Calu3 (cell line): ENCODE measurements at regions of chr16 and their contacts with region 1.

Region 1: DNA sequence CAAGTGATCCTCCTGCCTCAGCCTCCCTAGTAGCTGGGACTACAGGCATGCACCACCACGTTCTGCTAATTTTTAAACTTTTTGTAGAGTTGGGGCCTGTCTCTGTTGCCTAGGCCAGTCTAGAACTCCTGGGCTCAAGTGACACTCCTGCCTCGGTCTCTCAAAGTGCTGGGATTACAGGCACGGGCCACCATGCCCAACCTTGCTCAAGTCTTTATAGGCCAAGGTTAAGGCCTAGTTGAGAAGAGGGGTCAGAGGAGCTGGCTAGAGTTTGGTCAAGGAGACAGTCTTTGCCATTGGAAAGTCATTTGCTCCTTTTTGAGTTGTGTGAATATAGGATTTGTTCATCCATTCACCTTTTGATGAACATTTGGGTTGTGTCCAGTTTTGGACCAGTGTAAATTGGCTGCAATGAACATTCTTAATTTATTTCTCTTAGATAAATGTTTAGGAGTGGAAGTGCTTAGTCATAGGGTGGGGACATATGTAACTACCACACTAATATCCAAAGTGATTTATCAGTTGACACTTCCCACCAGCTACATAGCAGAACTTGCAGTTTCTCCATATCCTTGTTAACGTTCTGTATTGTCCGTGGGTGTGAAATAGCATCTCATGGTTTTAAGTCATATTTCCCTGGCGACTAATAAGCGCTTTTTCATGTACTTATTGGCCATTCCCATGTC is 30.7 kb upstream of the ARHGAP17 start:
- DNase-seq: no peak
- H3K4me3 Mint-ChIP-seq: no peak overlapping the region
- H3K27ac Mint-ChIP-seq: no peak overlapping the region
- H3K4me1 Mint-ChIP-seq: peaks cover 35% of the 10 kb centered on the region
- H3K27me3 Mint-ChIP-seq: no peaks in the 10 kb centered on the region
- CTCF ChIP-seq: no peak

Region 2: GRCh38 chr16:24844101-24845030 is 201.5 kb before region 1 on chr16:
- CTCF ChIA-PET with region 1: interaction called, 4 read pairs
- intact Hi-C with region 1: loop called (anchors 10 kb)
- DNase-seq: peak; percentile 76
- H3K4me3 Mint-ChIP-seq: peak overlapping the region; percentile 23
- H3K27ac Mint-ChIP-seq: peak overlapping the region; percentile 94
- H3K4me1 Mint-ChIP-seq: peaks cover 56% of the 10 kb centered on the region
- H3K27me3 Mint-ChIP-seq: no peaks in the 10 kb centered on the region
- CTCF ChIP-seq: no peak

Region 3: DNA sequence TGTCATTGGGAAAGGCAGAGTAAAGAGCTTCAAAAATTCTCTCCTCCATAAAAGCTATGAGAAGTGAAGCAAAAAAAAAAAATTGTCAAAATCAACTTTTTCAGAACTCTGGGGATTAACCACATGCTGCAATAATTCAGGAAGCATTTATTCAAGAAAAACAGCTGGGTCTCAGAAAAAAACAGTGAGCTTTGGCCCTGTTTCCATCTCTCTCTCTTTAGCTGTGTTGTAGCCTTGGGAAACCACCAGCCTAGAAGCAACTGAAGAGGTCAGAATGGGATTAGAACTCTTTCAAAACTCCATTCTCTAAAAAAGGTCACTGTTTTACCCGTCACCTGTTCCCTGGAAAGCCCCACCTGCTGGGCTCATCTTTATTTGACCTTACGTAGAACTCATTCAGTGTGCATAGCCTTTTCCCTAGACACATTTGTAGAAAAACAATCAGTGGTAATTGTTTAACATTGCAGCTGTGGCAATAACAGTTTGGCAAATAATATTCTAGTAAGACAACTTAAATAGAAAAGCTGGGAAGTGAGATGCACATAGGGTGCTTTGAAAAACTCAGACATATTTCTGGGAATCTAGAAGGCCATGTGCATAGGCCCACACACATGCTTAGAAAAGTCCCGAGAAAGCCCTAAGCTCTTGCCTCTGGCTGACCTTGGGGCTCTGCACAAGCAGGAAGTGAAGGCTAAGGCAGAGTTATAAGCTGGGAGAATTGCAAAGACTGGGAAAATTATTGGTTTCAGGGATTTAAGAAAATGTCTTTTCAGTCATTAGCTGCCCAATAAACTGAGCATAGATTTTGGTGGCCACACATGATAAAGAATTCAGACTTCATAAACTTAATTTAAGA is 182.0 kb before region 1 on chr16:
- CTCF ChIA-PET with region 1: no interaction called
- intact Hi-C with region 1: no loop called
- DNase-seq: no peak
- H3K4me3 Mint-ChIP-seq: no peak overlapping the region
- H3K27ac Mint-ChIP-seq: no peak overlapping the region
- H3K4me1 Mint-ChIP-seq: peaks cover 11% of the 10 kb centered on the region
- H3K27me3 Mint-ChIP-seq: no peaks in the 10 kb centered on the region
- CTCF ChIP-seq: no peak

Region 4: DNA sequence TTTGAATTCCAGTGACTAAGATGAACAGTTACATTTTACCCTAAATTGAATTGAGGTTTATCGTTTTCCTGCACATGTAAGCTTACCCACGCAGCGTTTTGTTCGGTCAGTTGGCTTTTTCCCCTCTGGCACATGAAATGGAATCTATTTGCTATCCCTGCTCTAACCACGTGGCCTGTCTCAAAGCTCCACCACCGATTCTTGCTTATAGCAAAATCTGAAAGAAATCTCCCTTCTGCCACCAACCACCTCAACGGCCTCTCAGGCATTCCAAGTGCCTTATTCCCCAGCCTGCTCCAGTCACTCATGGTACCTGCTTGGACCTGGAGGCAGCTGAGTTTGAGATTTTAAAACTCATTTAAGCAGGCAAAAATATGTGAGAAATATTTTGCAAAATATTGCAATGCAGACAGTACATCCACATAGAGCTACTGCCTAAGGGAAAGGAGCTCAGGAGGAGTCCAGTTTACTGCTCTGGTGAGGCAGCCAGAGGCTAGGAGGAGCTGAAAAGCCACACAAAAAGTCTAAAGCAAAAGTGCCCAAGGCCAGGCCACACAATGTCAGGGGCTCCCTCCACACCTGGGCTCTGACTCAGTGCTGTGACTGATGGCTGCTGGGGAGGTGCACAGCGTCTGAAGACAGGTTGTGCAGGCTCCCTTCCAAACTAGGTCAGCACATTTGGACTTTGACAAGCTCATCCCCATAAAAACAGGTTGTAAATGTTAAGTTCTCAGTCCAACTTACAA is 57.1 kb before region 1 on chr16:
- CTCF ChIA-PET with region 1: interaction called, 3 read pairs
- intact Hi-C with region 1: loop called (anchors 5 kb)
- DNase-seq: peak; percentile 75
- H3K4me3 Mint-ChIP-seq: peak overlapping the region; percentile 32
- H3K27ac Mint-ChIP-seq: peak overlapping the region; percentile 49
- H3K4me1 Mint-ChIP-seq: peaks cover 67% of the 10 kb centered on the region
- H3K27me3 Mint-ChIP-seq: no peaks in the 10 kb centered on the region
- CTCF ChIP-seq: no peak

Region 5: DNA sequence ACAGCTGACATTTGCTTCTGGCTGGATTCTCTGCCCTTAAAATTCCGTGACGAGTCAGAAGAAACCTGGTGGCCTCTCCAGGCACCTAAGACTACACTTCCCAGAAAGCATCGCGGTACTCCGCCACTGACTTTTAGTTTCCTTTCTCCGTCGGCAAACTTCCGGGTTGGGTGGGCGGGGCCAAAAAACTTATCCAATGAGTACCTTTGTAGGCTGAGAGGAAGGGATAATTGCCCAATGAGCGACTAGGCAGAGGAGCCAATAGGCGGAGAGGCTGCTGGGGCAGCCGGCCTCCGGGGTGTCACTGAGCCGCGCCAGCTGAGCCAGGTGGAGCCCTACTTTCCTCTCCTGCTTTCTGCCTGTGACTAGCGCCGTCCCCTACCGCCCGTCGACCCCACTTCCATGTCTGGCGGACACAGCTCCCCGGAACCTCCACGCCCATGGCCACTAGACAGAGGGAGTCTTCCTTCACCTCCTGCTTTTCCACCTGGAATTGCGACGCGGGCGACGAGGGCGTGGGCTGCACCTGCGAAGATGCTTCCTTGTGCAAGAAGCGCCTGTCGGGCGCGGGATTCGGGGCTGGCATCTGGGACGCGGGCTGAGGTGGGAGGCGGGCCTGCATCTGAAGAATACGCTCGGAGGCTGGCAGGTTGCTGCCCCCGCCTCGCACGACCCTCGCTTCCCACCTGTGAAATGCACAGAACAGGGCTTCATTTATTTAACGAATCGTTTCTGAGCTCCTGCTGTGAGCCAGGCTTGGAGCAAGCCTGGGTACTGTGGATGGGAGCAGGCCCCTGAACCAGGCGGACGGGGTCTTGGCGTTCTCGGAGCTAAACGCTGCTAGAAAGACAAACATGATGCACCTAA is 14.2 kb before region 1 on chr16:
- CTCF ChIA-PET with region 1: interaction called, 5 read pairs
- intact Hi-C with region 1: loop called (anchors 2 kb)
- DNase-seq: peak; percentile 95
- H3K4me3 Mint-ChIP-seq: peak overlapping the region; percentile 95
- H3K27ac Mint-ChIP-seq: peak overlapping the region; percentile 77
- H3K4me1 Mint-ChIP-seq: peaks cover 21% of the 10 kb centered on the region
- H3K27me3 Mint-ChIP-seq: no peaks in the 10 kb centered on the region
- CTCF ChIP-seq: no peak

Region 6: GRCh38 chr16:25143928-25144327 is 98.1 kb after region 1 on chr16:
- CTCF ChIA-PET with region 1: no interaction called
- intact Hi-C with region 1: no loop called
- DNase-seq: peak; percentile 26
- H3K4me3 Mint-ChIP-seq: no peak overlapping the region
- H3K27ac Mint-ChIP-seq: no peak overlapping the region
- H3K4me1 Mint-ChIP-seq: peaks cover 6% of the 10 kb centered on the region
- H3K27me3 Mint-ChIP-seq: no peaks in the 10 kb centered on the region
- CTCF ChIP-seq: peak; percentile 52

Region 7: GRCh38 chr16:25426829-25427228 is 381.0 kb after region 1 on chr16:
- CTCF ChIA-PET with region 1: no interaction called
- intact Hi-C with region 1: no loop called
- DNase-seq: no peak
- H3K4me3 Mint-ChIP-seq: no peak overlapping the region
- H3K27ac Mint-ChIP-seq: no peak overlapping the region
- H3K4me1 Mint-ChIP-seq: no peaks in the 10 kb centered on the region
- H3K27me3 Mint-ChIP-seq: peaks cover 4% of the 10 kb centered on the region
- CTCF ChIP-seq: no peak